ENCODE measurements at regions of chr5 and their contacts with region 1.

Region 1: GRCh38 chr5:151093476-151093889 is 12.6 kb upstream of the TNIP1 start:
- DNase-seq: peak; percentile 78 to 99 (median 95)
- H3K4me3 ChIP-seq: peak overlapping the region in 1 of 3 experiments; percentile 23
- H3K4me3 Mint-ChIP-seq: peak overlapping the region; percentile 72 to 76
- H3K27ac ChIP-seq: peak overlapping the region; percentile 94 to 96
- H3K27ac Mint-ChIP-seq: peak overlapping the region; percentile 98 to 100 (median 100)
- H3K4me1 ChIP-seq: peaks cover 88 to 97% of the 10 kb centered on the region in 2 donors
- H3K4me1 Mint-ChIP-seq: peaks cover 92% of the 10 kb centered on the region
- H3K27me3 ChIP-seq: no peaks in the 10 kb centered on the region
- H3K27me3 Mint-ChIP-seq: peaks cover 0 to under 1% (median 0%) of the 10 kb centered on the region in 3 donors
- CTCF ChIP-seq: no peak

Region 2: GRCh38 chr5:150809363-150809762 is 284.1 kb before region 1 on chr5:
- intact Hi-C with region 1: no loop called
- DNase-seq: no peak
- H3K4me3 ChIP-seq: no peak overlapping the region
- H3K4me3 Mint-ChIP-seq: no peak overlapping the region
- H3K27ac ChIP-seq: no peak overlapping the region
- H3K27ac Mint-ChIP-seq: no peak overlapping the region
- H3K4me1 ChIP-seq: no peaks in the 10 kb centered on the region
- H3K4me1 Mint-ChIP-seq: no peaks in the 10 kb centered on the region
- H3K27me3 ChIP-seq: no peaks in the 10 kb centered on the region
- H3K27me3 Mint-ChIP-seq: peaks cover 0 to 2% (median 0%) of the 10 kb centered on the region in 3 donors
- CTCF ChIP-seq: no peak

Region 3: GRCh38 chr5:151058891-151059489 is 34.5 kb before region 1 on chr5:
- intact Hi-C with region 1: loop called (anchors 5 kb)
- DNase-seq: peak; percentile 72 to 84 (median 84)
- H3K4me3 ChIP-seq: peak overlapping the region in 1 of 3 experiments; percentile 43
- H3K4me3 Mint-ChIP-seq: peak overlapping the region; percentile 62 to 78
- H3K27ac ChIP-seq: peak overlapping the region; percentile 69 to 90
- H3K27ac Mint-ChIP-seq: peak overlapping the region; percentile 96 to 99 (median 99)
- H3K4me1 ChIP-seq: peaks cover 92 to 99% of the 10 kb centered on the region in 2 donors
- H3K4me1 Mint-ChIP-seq: peaks cover 99% of the 10 kb centered on the region
- H3K27me3 ChIP-seq: no peaks in the 10 kb centered on the region
- H3K27me3 Mint-ChIP-seq: peaks cover 0 to 4% (median 0%) of the 10 kb centered on the region in 3 donors
- CTCF ChIP-seq: no peak

Region 4: GRCh38 chr5:151115274-151115905 is 21.9 kb after region 1 on chr5:
- intact Hi-C with region 1: loop called in 1 of 2 experiments (anchors 2 kb)
- DNase-seq: peak; percentile 55 to 75 (median 74)
- H3K4me3 ChIP-seq: no peak overlapping the region
- H3K4me3 Mint-ChIP-seq: no peak overlapping the region
- H3K27ac ChIP-seq: peak overlapping the region in 1 of 2 donors; percentile 44
- H3K27ac Mint-ChIP-seq: peak overlapping the region in 1 of 7 donors; percentile 63
- H3K4me1 ChIP-seq: no peaks in the 10 kb centered on the region
- H3K4me1 Mint-ChIP-seq: peaks cover 6% of the 10 kb centered on the region
- H3K27me3 ChIP-seq: no peaks in the 10 kb centered on the region
- H3K27me3 Mint-ChIP-seq: no peaks in the 10 kb centered on the region
- CTCF ChIP-seq: peak; percentile 98

Region 5: GRCh38 chr5:152942633-152943336 is 1849.3 kb after region 1 on chr5:
- intact Hi-C with region 1: no loop called
- DNase-seq: no peak
- H3K4me3 ChIP-seq: no peak overlapping the region
- H3K4me3 Mint-ChIP-seq: no peak overlapping the region
- H3K27ac ChIP-seq: no peak overlapping the region
- H3K27ac Mint-ChIP-seq: no peak overlapping the region
- H3K4me1 ChIP-seq: no peaks in the 10 kb centered on the region
- H3K4me1 Mint-ChIP-seq: no peaks in the 10 kb centered on the region
- H3K27me3 ChIP-seq: no peaks in the 10 kb centered on the region
- H3K27me3 Mint-ChIP-seq: no peaks in the 10 kb centered on the region
- CTCF ChIP-seq: no peak